ENCODE measurements at regions of chr17 and their contacts with region 1.

Region 1: GRCh38 chr17:39668199-39668966 is at the start of gene PNMT:
- DNase-seq: peak; percentile 100
- H3K4me3 Mint-ChIP-seq: peak within 1 kb of the TSS; percentile 24
- H3K27ac Mint-ChIP-seq: peak within 1 kb of the TSS; percentile 0
- H3K4me1 Mint-ChIP-seq: peaks cover 65% of the 10 kb centered on the region
- H3K27me3 Mint-ChIP-seq: peaks cover 69% of the 10 kb centered on the region
- CTCF ChIP-seq: no peak
- total RNA-seq, gene PNMT: 1.3 and 3.2 TPM in 2 replicates

Region 2: GRCh38 chr17:39485555-39485954 is 182.8 kb before region 1 on chr17:
- CTCF ChIA-PET with region 1: no interaction called
- intact Hi-C with region 1: no loop called
- DNase-seq: peak; percentile 61
- H3K4me3 Mint-ChIP-seq: no peak overlapping the region
- H3K27ac Mint-ChIP-seq: peak overlapping the region; percentile 21
- H3K4me1 Mint-ChIP-seq: no peaks in the 10 kb centered on the region
- H3K27me3 Mint-ChIP-seq: no peaks in the 10 kb centered on the region
- CTCF ChIP-seq: no peak

Region 3: GRCh38 chr17:39563476-39563875 is 104.9 kb before region 1 on chr17:
- CTCF ChIA-PET with region 1: no interaction called
- intact Hi-C with region 1: no loop called
- DNase-seq: no peak
- H3K4me3 Mint-ChIP-seq: no peak overlapping the region
- H3K27ac Mint-ChIP-seq: no peak overlapping the region
- H3K4me1 Mint-ChIP-seq: no peaks in the 10 kb centered on the region
- H3K27me3 Mint-ChIP-seq: no peaks in the 10 kb centered on the region
- CTCF ChIP-seq: no peak

Region 4: DNA sequence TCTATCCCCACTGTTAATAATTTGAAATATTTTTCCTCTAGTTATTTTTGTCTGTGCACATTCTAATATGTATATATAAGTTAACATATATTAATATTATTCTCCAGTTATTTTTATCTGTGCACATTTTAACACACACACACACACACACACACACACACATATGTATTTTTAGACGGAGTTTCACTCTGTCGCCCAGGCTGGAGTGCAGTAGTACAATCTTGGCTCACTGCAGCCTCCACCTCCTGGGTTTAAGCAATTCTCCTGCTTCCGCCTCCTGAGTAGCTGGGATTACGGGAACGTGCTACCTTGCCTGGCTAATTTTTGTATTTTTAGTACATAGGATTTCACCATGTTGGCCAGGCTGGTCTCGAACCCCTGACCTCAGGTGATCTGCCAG is 49.3 kb after region 1 on chr17:
- CTCF ChIA-PET with region 1: interaction called, 34,714 read pairs
- intact Hi-C with region 1: loop called (anchors 1 kb)
- DNase-seq: no peak
- H3K4me3 Mint-ChIP-seq: no peak overlapping the region
- H3K27ac Mint-ChIP-seq: peak overlapping the region; percentile 2
- H3K4me1 Mint-ChIP-seq: peaks cover 21% of the 10 kb centered on the region
- H3K27me3 Mint-ChIP-seq: no peaks in the 10 kb centered on the region
- CTCF ChIP-seq: no peak

Measured in Calu3 (cell line).